ENCODE measurements at regions of chr13 and their contacts with region 1.

Region 1: GRCh38 chr13:30679483-30680330 is 55.6 kb upstream of the ALOX5AP start:
- DNase-seq: no peak
- ATAC-seq: peak in 3 of 4 donors; percentile 53 to 62 (median 61)
- H3K4me3 ChIP-seq: no peak overlapping the region
- H3K27ac ChIP-seq: no peak overlapping the region
- H3K4me1 ChIP-seq: no peaks in the 10 kb centered on the region
- H3K27me3 ChIP-seq: no peaks in the 10 kb centered on the region
- CTCF ChIP-seq: peak in 2 of 4 donors; percentile 12 to 17

Region 2: GRCh38 chr13:30551189-30551588 is 128.5 kb before region 1 on chr13:
- intact Hi-C with region 1: no loop called
- DNase-seq: peak in 1 of 6 donors; percentile 15
- ATAC-seq: peak; percentile 88 to 97 (median 90)
- H3K4me3 ChIP-seq: no peak overlapping the region
- H3K27ac ChIP-seq: no peak overlapping the region
- H3K4me1 ChIP-seq: no peaks in the 10 kb centered on the region
- H3K27me3 ChIP-seq: no peaks in the 10 kb centered on the region
- CTCF ChIP-seq: peak in 2 of 4 donors; percentile 17 to 26

Region 3: GRCh38 chr13:30792285-30793000 is 112.7 kb after region 1 on chr13:
- intact Hi-C with region 1: loop called in 1 of 3 experiments (anchors 10 kb)
- DNase-seq: peak; percentile 60 to 75 (median 68)
- ATAC-seq: peak; percentile 84 to 91 (median 91)
- H3K4me3 ChIP-seq: no peak overlapping the region
- H3K27ac ChIP-seq: peak overlapping the region in 2 of 4 donors; percentile 48 to 52
- H3K4me1 ChIP-seq: no peaks in the 10 kb centered on the region
- H3K27me3 ChIP-seq: no peaks in the 10 kb centered on the region
- CTCF ChIP-seq: peak in 1 of 4 donors; percentile 8

Measured in pancreas (tissue), 10 donors.